ENCODE measurements at regions of chr9 and their contacts with region 1.

Region 1: DNA sequence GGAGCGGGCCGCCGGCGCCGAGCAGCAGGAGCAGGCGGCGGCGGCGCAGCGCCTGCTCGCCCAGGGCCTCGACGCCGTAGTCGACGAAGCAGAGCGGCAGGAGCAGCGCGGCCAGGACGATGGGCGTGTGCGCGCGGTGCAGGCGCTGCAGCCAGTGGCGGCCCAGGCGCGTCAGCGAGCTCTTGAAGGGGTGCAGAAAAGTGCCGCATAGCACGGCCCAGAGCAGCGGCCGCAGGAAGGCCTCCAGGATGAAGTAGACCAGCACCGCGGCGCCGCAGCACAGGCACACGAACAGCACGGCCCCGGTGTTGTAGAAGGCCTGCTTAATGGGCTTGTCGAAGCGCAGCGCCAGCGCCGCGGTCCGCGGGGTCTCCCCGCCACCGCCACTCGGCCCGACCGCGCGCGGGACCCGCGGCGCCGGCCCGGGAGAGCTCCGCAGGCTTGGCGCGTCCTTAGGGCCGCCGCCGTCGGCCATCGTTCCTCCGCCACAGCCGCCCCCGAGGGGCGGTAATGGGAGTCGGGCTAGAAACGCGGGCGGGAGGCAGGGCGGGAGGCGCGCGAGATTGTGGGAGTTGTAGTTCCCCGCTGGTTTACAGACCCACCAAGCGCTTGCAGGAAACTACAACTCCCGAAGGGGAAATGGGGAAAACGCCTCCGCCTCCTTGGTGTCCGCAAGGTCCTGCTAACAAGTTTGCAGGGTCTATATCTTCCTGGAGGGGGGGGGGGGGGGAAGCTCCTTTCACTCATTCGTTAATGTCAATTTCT is at the start of gene TMEM245:
- DNase-seq: peak; percentile 100
- ATAC-seq: peak; percentile 96
- H3K4me3 ChIP-seq: peak within 1 kb of the TSS; percentile 84
- H3K27ac ChIP-seq: peak within 1 kb of the TSS; percentile 74
- H3K4me1 ChIP-seq: peaks cover 3% of the 10 kb centered on the region
- H3K27me3 ChIP-seq: no peaks in the 10 kb centered on the region
- CTCF ChIP-seq: no peak
- POLR2A ChIP-seq: peak; percentile 60; the same call in 1 of the 2 replicates
- RAD21 ChIP-seq: no peak
- total RNA-seq, gene TMEM245: 51.7 and 57.9 TPM in 2 replicates

Region 2: DNA sequence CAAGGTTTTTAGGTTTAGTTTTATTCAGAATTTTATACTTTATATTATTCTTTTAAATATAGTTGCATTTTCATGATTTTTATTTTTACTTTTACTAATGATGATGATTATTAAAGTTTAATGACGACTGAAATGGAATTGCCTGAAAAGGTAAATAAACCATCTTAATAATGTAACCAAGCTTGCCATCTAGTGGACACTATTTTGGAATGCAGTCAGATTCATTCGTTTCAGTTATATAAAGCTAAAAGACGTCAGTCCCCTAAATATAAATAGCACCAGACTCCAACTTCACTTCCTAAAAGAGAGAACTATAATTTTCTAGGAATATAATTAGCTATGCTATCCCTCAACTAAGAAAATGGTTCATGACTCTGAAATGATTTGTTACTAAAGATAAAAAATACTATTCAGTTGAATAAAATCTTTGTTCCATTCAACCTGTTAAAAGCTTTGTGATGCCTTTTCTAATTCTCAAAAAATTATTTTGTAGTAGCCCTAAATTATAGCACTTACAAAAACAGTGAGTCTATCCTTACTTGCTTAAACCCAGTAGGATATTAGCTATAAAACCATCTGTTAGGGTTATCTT is 165.5 kb before region 1 on chr9:
- CTCF ChIA-PET with region 1: no interaction called
- POLR2A ChIA-PET with region 1: no interaction called
- dilution Hi-C with region 1: no loop called
- in situ Hi-C with region 1: no loop called
- intact Hi-C with region 1: no loop called
- DNase-seq: peak; percentile 71
- ATAC-seq: peak; percentile 74
- H3K4me3 ChIP-seq: no peak overlapping the region
- H3K27ac ChIP-seq: no peak overlapping the region
- H3K4me1 ChIP-seq: no peaks in the 10 kb centered on the region
- H3K27me3 ChIP-seq: no peaks in the 10 kb centered on the region
- CTCF ChIP-seq: peak; percentile 70
- POLR2A ChIP-seq: no peak
- RAD21 ChIP-seq: peak; percentile 33; the same call in 1 of the 2 replicates

Region 3: DNA sequence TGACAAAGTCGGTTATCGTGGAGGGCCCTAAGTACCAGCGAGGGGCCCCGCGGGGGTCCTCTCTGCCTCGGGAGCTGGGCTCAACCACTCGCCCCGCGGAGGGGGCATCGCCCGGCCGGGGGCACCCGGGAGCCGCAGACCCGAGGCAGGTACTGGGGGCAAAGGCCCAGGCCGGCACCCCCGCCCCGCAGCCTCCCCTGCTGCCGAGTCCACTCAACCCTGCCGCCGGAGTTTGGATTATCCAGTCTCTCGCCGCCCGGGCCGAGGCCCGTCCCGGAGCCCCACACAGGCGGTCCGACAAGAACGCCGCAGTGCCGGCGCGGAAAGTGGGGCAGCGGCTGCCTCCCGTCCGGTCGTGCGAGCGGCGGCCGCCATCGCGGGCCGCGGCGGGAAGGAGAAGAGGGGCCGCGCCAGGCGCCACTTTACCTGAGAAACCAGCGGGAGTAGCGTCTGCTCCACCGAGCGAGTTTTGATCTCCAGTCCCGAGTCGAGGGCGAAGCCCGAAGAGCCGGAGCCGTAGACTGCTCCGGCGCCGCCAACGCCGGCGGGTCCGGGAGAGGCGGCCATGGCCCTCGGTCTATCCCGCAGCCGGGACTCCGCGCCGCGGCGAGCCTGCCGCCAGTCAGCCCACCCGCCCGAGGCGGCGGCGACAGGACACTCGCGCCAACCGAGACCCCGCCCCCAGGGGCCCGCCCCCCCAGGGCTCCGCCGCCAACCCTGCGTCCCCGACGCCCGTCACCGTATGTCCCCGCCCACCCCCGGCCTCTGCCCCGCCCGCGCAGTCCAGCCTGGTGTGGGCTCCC is 106.5 kb before region 1 on chr9 and contains the start of gene CTNNAL1:
- CTCF ChIA-PET with region 1: no interaction called
- POLR2A ChIA-PET with region 1: no interaction called
- dilution Hi-C with region 1: no loop called
- in situ Hi-C with region 1: no loop called
- intact Hi-C with region 1: loop called (anchors 1 kb)
- DNase-seq: peak; percentile 81
- ATAC-seq: peak; percentile 89
- H3K4me3 ChIP-seq: peak within 1 kb of the TSS; percentile 71
- H3K27ac ChIP-seq: peak within 1 kb of the TSS; percentile 84
- H3K4me1 ChIP-seq: peaks cover 15% of the 10 kb centered on the region
- H3K27me3 ChIP-seq: no peaks in the 10 kb centered on the region
- CTCF ChIP-seq: no peak
- POLR2A ChIP-seq: peak; percentile 92
- RAD21 ChIP-seq: no peak
- total RNA-seq, gene CTNNAL1: 131 and 186 TPM in 2 replicates

Region 4: DNA sequence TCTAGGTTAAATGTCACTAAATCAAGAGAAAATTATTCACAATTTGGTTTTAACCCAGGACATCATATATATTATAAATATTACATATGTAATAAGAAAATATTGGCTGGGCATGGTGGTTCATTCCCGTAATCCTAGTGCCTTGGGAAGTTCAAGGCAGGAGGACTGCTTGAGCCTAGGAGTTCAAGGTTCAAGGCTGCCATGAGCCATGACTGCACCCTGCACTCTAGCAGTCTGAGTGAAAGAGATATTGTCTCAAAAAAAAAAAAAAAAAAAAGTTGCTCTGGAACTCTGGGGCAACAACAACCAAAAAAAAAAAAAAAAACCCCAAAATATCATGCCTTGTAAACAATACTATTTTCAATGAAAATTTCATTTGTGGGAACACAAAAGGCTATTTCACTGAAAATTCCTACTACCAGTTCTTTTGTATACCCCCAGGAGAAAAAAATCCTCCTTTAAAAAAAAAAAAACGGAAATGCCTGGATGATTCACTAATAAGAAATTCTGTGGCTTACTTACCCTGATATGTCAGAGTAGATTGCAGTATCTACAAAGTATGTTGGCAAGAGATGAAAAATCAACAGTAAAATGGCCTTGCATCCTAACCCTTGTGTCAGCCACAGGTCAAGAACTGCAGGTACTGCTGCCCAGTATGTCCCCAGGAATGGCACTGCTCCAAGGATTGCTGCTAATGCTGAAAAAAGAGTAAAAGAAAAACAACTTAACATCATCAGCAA is 83.8 kb before region 1 on chr9:
- CTCF ChIA-PET with region 1: no interaction called
- POLR2A ChIA-PET with region 1: no interaction called
- dilution Hi-C with region 1: no loop called
- in situ Hi-C with region 1: no loop called
- intact Hi-C with region 1: loop called (anchors 1 kb)
- DNase-seq: peak; percentile 85
- ATAC-seq: peak; percentile 84
- H3K4me3 ChIP-seq: no peak overlapping the region
- H3K27ac ChIP-seq: peak overlapping the region; percentile 98
- H3K4me1 ChIP-seq: peaks cover 16% of the 10 kb centered on the region
- H3K27me3 ChIP-seq: no peaks in the 10 kb centered on the region
- CTCF ChIP-seq: no peak
- POLR2A ChIP-seq: no peak
- RAD21 ChIP-seq: no peak

Region 5: GRCh38 chr9:109107402-109108240 is 12.0 kb before region 1 on chr9:
- CTCF ChIA-PET with region 1: no interaction called
- POLR2A ChIA-PET with region 1: interaction called, 11 read pairs
- dilution Hi-C with region 1: no loop called
- in situ Hi-C with region 1: no loop called
- intact Hi-C with region 1: no loop called
- DNase-seq: peak; percentile 81
- ATAC-seq: peak; percentile 67
- H3K4me3 ChIP-seq: peak overlapping the region; percentile 11; the same call in 1 of the 2 replicates
- H3K27ac ChIP-seq: peak overlapping the region; percentile 39; the same call in 1 of the 2 replicates
- H3K4me1 ChIP-seq: peaks cover 6% of the 10 kb centered on the region
- H3K27me3 ChIP-seq: no peaks in the 10 kb centered on the region
- CTCF ChIP-seq: no peak
- POLR2A ChIP-seq: no peak
- RAD21 ChIP-seq: no peak

Region 6: DNA sequence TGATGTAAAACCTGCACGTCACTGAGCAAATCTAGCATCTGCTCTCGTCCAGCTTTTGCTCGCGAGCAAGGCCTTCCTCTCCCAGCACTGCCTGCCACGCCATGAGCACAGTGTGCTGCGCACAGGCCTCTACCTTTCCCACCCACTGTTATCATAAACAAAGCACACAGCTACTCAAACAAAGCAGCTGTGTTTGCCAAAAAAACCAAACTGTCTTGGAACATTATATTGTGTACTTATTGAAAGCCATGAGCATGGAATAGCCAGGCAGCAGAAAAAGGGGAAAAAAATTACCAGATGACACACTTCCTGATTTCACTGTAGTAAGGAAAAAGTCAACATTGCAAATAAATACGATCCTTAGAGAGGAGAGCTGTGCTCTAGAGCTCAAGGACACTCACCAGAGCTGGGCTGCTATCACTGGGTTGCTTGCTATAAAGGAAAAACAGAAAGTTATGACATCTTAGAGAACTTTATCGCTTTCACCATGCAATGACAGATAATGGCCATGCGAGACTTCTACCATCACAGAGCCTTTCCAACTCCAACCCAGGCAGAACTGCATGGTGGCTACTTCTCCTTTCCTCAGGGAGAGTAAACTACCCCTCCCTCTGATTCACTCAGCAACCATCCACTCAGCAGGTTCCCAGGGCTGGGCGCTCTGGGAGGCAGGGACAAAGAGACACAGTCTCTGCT is 131.6 kb after region 1 on chr9:
- CTCF ChIA-PET with region 1: no interaction called
- POLR2A ChIA-PET with region 1: no interaction called
- dilution Hi-C with region 1: no loop called
- in situ Hi-C with region 1: no loop called
- intact Hi-C with region 1: loop called (anchors 10 kb)
- DNase-seq: peak; percentile 65
- ATAC-seq: peak; percentile 55
- H3K4me3 ChIP-seq: no peak overlapping the region
- H3K27ac ChIP-seq: peak overlapping the region; percentile 61
- H3K4me1 ChIP-seq: peaks cover 27% of the 10 kb centered on the region
- H3K27me3 ChIP-seq: no peaks in the 10 kb centered on the region
- CTCF ChIP-seq: no peak
- POLR2A ChIP-seq: no peak
- RAD21 ChIP-seq: no peak